GM18951 (cell line): ENCODE measurements at regions of chr6 and their contacts with region 1.

Region 1: DNA sequence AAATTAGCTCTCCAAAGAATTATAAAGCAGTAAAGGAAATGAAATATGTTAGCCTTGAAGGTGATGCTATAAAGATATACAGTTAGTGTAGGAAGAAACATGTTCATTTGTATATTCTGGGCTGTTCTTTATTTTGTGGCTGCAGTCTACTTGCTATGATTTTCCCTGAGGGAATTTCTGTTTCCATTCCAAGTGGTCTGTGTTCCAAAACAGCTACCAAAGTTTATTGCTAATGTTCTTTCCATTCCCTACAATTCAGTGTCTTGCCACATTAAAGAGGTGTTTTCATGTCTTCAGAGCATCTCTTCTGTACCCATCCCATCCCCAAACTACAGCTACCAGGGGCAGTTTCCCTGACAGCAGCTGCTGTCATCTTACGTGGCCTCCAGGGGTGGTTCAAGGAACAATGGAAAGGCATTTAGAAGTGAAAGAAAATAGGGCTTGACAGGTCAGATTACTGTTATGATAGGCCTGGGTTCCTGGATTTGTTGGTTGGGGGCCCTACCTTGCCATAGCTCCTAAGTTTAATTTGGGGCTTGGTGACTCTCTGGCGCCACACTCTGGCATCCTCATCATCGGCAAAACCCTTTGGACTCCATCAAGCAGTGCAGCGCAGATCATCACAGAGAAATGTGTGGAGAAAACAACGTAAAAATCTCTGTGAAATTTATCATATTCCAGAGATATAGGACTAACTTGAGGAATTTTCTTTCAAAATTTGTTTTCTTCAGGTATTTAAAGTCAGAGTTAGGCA is 33.8 kb upstream of the AIG1 start:
- POLR2A ChIP-seq: no peak

Region 2: GRCh38 chr6:142692942-142693341 is 333.9 kb before region 1 on chr6:
- in situ Hi-C with region 1: loop called (anchors 25 kb)
- POLR2A ChIP-seq: no peak

Region 3: GRCh38 chr6:142845624-142846458 is 181.0 kb before region 1 on chr6:
- in situ Hi-C with region 1: no loop called
- POLR2A ChIP-seq: no peak

Region 4: DNA sequence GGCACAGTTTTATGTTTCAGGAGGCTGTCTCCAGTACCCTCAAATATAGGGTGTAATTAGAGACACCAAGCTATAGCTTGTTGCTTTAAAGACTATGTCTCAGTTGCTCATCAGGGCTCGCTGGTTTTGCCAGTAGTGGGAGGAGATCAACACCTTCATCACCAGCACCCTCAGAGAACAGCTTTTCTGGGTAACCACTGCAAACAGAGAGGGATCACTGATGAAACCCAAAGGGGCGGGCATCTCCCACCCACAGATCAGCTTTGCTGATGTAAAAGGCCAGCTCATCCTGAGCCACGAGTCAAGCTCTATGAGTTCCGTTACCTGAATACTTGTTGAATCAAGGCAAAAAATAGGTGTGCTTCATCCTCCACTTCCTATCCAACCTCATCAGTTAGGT is 221.5 kb after region 1 on chr6:
- in situ Hi-C with region 1: no loop called
- POLR2A ChIP-seq: no peak